ENCODE measurements at regions of chr4 and their contacts with region 1.

Region 1: DNA sequence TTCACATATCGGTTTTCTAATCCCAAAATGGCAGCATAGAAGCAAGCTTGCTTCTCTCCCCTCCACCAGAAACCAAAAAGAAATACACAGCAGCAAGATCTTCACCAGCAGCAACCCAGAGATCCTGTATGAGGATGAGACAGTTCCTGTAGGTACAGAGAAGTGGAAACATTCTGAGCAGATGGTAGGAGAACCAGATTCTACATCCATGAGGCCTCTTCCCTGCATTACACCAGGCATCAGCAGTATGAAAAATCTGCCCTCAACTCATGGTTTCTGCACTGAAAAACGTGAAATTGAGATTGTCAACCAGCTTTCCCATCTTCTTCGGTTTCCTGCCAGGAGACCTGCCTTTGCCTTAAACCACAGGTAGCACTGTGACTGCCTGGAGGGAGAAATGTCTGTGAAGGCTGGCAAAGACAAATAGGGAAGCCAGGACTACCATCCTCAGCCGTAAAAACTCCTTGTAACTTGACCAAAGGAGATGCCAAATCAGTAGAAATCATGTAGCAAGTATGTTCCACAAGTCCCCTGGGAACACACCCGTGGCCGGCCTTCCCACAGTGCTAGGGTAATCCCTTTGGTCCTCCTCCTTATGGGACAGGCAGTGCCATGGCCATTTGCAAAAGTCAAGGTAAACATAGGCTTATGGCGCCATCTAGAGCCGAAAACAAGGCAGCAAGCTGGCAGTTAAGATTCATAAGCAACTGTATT is 24.0 kb upstream of the MTHFD2L start:
- DNase-seq: peak; percentile 82
- H3K4me3 ChIP-seq: no peak overlapping the region
- H3K27ac ChIP-seq: no peak overlapping the region
- H3K4me1 ChIP-seq: no peaks in the 10 kb centered on the region
- H3K27me3 ChIP-seq: no peaks in the 10 kb centered on the region
- CTCF ChIP-seq: peak; percentile 70 to 78 (median 76)
- EP300 ChIP-seq: no peak
- POLR2A ChIP-seq: no peak

Region 2: DNA sequence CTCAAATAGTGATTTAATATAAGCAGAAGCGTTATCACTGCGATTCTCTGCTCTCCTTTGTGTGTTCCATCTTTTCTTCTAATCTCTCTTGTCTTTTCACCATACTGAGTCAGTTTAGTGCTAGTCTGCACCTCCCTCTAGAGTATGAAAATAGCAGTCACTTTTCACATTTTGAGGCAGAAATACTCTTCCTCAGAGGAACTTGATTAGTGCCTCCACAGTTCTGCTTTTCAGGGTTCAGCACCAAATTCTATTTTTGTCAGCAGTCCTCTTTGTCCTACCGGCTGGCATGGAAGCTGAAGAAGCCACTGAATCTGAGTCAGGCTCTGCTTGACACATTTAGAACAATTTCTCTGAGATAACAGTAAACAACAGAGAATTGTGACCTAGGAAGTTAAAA is 825.7 kb before region 1 on chr4:
- in situ Hi-C with region 1: loop called in 1 of 4 experiments (anchors 25 kb)
- intact Hi-C with region 1: no loop called
- DNase-seq: no peak
- H3K4me3 ChIP-seq: no peak overlapping the region
- H3K27ac ChIP-seq: no peak overlapping the region
- H3K4me1 ChIP-seq: no peaks in the 10 kb centered on the region
- H3K27me3 ChIP-seq: no peaks in the 10 kb centered on the region
- CTCF ChIP-seq: peak in 1 of 5 experiments; percentile 5
- EP300 ChIP-seq: no peak
- POLR2A ChIP-seq: no peak

Region 3: DNA sequence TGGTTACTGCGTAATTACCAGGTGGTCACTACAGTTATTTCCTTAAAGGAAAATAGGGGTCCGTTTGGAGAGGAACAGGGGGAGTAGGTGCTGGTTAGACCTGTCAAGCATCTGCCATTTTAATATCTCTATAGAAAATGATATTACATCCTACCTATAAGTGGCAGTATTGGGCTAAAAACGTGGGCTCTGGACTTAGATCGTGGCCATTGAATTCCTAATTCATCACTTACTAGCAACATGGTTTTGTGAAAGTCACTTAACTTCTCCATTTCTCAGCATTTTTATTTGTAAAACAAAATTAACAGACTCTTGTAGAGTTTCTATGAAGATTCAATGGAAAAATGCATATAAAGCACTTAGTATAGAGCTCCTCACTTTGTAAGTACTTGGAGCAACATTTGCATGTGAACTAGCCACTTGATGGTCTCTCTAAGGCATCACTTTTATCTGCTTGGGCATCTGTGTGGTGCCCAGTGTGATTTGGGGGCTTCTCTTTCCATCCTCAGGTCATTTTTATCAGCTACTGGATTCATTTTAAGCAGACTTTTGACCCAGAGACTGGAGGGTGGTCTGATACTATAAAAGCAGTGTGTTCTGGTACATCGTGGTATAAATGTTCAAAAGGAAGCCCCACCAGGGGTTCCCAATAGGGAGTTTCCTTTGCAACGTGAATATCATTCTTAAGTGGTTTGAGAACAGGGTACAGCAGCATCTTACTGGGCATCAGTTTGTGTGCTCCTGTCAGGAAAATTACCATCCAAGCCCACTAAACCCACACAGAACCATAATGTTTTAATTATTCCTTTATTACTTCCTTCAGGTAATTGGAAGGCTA is 471.0 kb before region 1 on chr4:
- in situ Hi-C with region 1: loop called in 3 of 4 experiments (anchors 10 kb)
- intact Hi-C with region 1: loop called (anchors 5 kb)
- DNase-seq: no peak
- H3K4me3 ChIP-seq: no peak overlapping the region
- H3K27ac ChIP-seq: no peak overlapping the region
- H3K4me1 ChIP-seq: peaks cover 0 to 7% (median 0%) of the 10 kb centered on the region in 4 donors
- H3K27me3 ChIP-seq: no peaks in the 10 kb centered on the region
- CTCF ChIP-seq: peak; percentile 36 to 48 (median 47)
- EP300 ChIP-seq: no peak
- POLR2A ChIP-seq: no peak

Region 4: DNA sequence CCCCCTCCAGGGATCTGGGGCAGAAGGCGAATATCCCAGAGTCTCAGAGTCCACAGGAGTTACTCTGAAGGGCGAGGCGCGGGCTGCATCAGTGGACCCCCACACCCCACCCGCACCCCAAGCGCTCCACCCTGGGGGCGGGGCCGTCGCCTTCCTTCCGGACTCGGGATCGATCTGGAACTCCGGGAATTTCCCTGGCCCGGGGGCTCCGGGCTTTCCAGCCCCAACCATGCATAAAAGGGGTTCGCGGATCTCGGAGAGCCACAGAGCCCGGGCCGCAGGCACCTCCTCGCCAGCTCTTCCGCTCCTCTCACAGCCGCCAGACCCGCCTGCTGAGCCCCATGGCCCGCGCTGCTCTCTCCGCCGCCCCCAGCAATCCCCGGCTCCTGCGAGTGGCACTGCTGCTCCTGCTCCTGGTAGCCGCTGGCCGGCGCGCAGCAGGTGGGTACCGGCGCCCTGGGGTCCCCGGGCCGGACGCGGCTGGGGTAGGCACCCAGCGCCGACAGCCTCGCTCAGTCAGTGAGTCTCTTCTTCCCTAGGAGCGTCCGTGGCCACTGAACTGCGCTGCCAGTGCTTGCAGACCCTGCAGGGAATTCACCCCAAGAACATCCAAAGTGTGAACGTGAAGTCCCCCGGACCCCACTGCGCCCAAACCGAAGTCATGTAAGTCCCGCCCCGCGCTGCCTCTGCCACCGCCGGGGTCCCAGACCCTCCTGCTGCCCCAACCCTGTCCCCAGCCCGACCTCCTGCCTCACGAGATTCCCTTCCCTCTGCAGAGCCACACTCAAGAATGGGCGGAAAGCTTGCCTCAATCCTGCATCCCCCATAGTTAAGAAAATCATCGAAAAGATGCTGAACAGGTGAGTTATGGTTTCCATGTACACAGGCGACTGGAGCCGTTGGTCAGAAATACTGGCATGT is 264.6 kb before region 1 on chr4 and contains the start of gene CXCL1:
- in situ Hi-C with region 1: loop called in 1 of 4 experiments (anchors 25 kb)
- intact Hi-C with region 1: no loop called
- DNase-seq: peak; percentile 74
- H3K4me3 ChIP-seq: peak within 1 kb of the TSS; percentile 47 to 77 (median 56)
- H3K27ac ChIP-seq: peak within 1 kb of the TSS; percentile 70 to 82 (median 76)
- H3K4me1 ChIP-seq: peaks cover 0 to 19% (median 0%) of the 10 kb centered on the region in 4 donors
- H3K27me3 ChIP-seq: peaks cover 12% of the 10 kb centered on the region
- CTCF ChIP-seq: no peak
- EP300 ChIP-seq: no peak
- POLR2A ChIP-seq: peak; percentile 46
- total RNA-seq, gene CXCL1: 1.00 to 36.3 (median 15.4) TPM

Region 5: GRCh38 chr4:74042681-74043080 is 91.3 kb before region 1 on chr4:
- in situ Hi-C with region 1: loop called in 1 of 4 experiments (anchors 10 kb)
- intact Hi-C with region 1: no loop called
- DNase-seq: peak; percentile 43
- H3K4me3 ChIP-seq: no peak overlapping the region
- H3K27ac ChIP-seq: no peak overlapping the region
- H3K4me1 ChIP-seq: peaks cover 0 to 11% (median 4%) of the 10 kb centered on the region in 4 donors
- H3K27me3 ChIP-seq: no peaks in the 10 kb centered on the region
- CTCF ChIP-seq: peak in 4 of 5 experiments; percentile 19 to 32 (median 26)
- EP300 ChIP-seq: no peak
- POLR2A ChIP-seq: no peak

Measured in transverse colon (tissue), 4 donors.